Calu3 (cell line): ENCODE measurements at regions of chr18 and their contacts with region 1.

Region 1: DNA sequence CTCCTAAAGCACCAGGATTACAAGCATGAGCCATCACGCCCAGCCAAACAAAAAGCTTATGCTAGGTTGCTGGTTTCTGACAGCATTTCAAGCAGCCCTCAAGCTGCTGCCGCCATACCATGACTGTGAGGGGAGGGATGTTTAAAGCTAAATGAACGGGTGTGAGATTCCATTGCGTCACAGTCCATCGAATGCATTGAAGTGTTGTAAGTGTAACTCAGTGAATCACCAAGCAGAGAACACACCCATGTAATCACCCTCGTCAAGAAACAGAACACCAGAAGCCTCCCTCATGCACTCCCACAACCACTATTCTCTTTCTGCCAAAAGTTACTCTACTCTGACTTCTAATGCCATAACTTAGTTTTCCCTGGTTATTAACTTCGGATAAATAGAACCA is 32.8 kb upstream of the MC5R start:
- DNase-seq: no peak
- H3K4me3 Mint-ChIP-seq: no peak overlapping the region
- H3K27ac Mint-ChIP-seq: no peak overlapping the region
- H3K4me1 Mint-ChIP-seq: no peaks in the 10 kb centered on the region
- H3K27me3 Mint-ChIP-seq: no peaks in the 10 kb centered on the region
- CTCF ChIP-seq: no peak

Region 2: GRCh38 chr18:13660510-13660909 is 130.7 kb before region 1 on chr18:
- CTCF ChIA-PET with region 1: no interaction called
- intact Hi-C with region 1: loop called (anchors 10 kb)
- DNase-seq: no peak
- H3K4me3 Mint-ChIP-seq: no peak overlapping the region
- H3K27ac Mint-ChIP-seq: no peak overlapping the region
- H3K4me1 Mint-ChIP-seq: no peaks in the 10 kb centered on the region
- H3K27me3 Mint-ChIP-seq: no peaks in the 10 kb centered on the region
- CTCF ChIP-seq: no peak

Region 3: DNA sequence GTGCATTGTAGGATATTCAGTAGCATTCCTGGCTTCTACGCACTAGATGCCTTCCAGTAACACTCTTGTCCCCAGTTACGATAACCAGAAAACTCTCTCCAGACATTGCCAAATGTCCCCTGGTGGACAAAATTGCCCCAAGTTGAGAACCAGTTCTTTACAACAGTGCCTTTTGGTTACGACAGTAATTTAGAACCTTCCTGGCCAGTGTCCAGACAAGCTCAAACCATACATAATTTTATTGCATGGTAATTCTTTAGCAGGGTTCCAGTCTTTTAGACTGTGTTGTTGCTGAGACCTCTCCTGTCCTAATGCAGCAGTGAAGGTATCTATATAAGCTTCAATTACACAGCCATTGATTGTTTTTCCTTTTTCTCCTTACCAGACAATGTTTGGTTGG is 44.5 kb before region 1 on chr18:
- CTCF ChIA-PET with region 1: no interaction called
- intact Hi-C with region 1: loop called (anchors 5 kb)
- DNase-seq: no peak
- H3K4me3 Mint-ChIP-seq: no peak overlapping the region
- H3K27ac Mint-ChIP-seq: no peak overlapping the region
- H3K4me1 Mint-ChIP-seq: no peaks in the 10 kb centered on the region
- H3K27me3 Mint-ChIP-seq: no peaks in the 10 kb centered on the region
- CTCF ChIP-seq: no peak

Region 4: GRCh38 chr18:13849526-13850170 is 58.5 kb after region 1 on chr18:
- CTCF ChIA-PET with region 1: no interaction called
- intact Hi-C with region 1: loop called (anchors 10 kb)
- DNase-seq: no peak
- H3K4me3 Mint-ChIP-seq: no peak overlapping the region
- H3K27ac Mint-ChIP-seq: no peak overlapping the region
- H3K4me1 Mint-ChIP-seq: no peaks in the 10 kb centered on the region
- H3K27me3 Mint-ChIP-seq: no peaks in the 10 kb centered on the region
- CTCF ChIP-seq: no peak